Activated CD4-positive, alpha-beta T cell treated with anti-CD3 and anti-CD28 coated beads, Interleukin-2, amount 10 ng/mL, durations not matched to agents 7 days and 5 days (primary cell): ENCODE measurements at regions of chr3 and their contacts with region 1.

Region 1: GRCh38 chr3:33787328-33788009 is 11.0 kb upstream of the PDCD6IP start:
- DNase-seq: peak; percentile 71
- H3K4me3 Mint-ChIP-seq: no peak overlapping the region
- H3K27ac Mint-ChIP-seq: no peak overlapping the region
- H3K4me1 Mint-ChIP-seq: peaks cover 12% of the 10 kb centered on the region
- H3K27me3 Mint-ChIP-seq: peaks cover 23% of the 10 kb centered on the region

Region 2: GRCh38 chr3:33773637-33774036 is 13.8 kb before region 1 on chr3:
- CTCF ChIA-PET with region 1: interaction called, 12 read pairs
- POLR2A ChIA-PET with region 1: no interaction called
- DNase-seq: no peak
- H3K4me3 Mint-ChIP-seq: no peak overlapping the region
- H3K27ac Mint-ChIP-seq: no peak overlapping the region
- H3K4me1 Mint-ChIP-seq: no peaks in the 10 kb centered on the region
- H3K27me3 Mint-ChIP-seq: peaks cover 2% of the 10 kb centered on the region

Region 3: DNA sequence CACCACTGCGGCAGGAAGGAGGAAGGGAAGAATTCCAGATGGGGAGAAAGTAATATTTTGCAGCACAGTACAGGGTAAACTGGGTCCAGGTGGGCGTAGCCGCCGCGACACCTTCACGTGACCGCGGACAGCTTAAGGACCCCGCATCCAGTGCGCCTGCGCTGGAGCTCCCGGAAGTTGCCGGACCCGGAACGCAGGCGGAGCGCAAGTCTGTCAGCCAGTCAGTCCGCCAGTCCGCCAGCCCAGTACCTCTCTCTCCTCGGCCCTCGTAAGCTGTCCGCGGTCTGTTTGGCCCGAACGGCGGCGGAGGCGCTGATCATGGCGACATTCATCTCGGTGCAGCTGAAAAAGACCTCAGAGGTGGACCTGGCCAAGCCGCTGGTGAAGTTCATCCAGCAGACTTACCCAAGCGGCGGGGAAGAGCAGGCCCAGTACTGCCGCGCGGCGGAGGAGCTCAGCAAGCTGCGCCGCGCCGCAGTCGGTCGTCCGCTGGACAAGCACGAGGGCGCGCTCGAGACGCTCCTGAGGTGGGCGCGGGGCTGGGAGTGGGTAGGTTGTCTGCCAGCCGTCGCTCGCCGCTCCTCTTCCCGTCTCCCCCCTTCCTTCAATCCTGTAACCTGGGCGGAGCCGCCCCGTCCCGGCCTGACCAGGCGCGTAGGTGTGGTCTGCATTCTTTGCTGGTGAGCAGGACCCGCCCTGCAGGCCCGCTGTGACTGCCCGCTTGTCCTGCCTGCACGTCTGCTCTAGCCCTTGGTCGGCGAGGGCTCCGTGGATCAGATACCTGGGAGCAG is 11.1 kb after region 1 on chr3 and contains the start of gene PDCD6IP:
- CTCF ChIA-PET with region 1: interaction called, 13 read pairs
- POLR2A ChIA-PET with region 1: no interaction called
- DNase-seq: peak; percentile 90
- H3K4me3 Mint-ChIP-seq: peak within 1 kb of the TSS; percentile 96
- H3K27ac Mint-ChIP-seq: peak within 1 kb of the TSS; percentile 97
- H3K4me1 Mint-ChIP-seq: peaks cover 51% of the 10 kb centered on the region
- H3K27me3 Mint-ChIP-seq: no peaks in the 10 kb centered on the region
- total RNA-seq, gene PDCD6IP: 164 to 193 TPM

Region 4: DNA sequence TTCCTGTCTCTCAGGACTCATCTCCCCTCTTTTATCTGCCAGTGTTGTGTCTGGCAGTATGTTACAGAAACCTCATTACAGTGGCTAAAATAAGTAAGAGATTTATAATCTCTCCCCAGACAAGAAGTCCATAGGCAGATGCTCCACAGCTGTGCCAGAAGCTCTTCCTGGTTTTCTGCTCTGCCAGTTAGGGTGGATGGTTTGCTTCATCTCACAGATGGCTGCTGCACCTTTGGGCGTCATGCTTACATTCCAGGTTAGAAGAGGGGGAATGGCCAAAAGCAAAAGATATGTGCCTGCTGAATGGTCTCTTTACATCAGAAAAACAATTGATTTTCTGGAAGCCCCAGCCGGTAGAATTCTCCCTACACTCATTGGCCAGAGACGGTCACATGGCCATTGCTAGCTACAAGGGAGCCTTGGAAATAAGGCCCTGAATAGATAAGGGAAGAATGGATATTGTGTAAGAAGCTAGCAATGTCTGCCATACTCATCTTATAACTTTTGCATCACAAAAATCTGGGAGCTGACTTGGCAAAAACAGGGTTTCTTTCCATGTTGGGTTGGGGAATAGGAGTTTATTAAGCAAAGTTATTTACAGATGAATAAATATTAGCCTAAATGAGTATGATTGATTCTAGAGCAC is 102.0 kb after region 1 on chr3:
- CTCF ChIA-PET with region 1: no interaction called
- POLR2A ChIA-PET with region 1: no interaction called
- DNase-seq: no peak
- H3K4me3 Mint-ChIP-seq: no peak overlapping the region
- H3K27ac Mint-ChIP-seq: no peak overlapping the region
- H3K4me1 Mint-ChIP-seq: no peaks in the 10 kb centered on the region
- H3K27me3 Mint-ChIP-seq: peaks cover 1% of the 10 kb centered on the region